ENCODE measurements at regions of chr12 and their contacts with region 1.

Region 1: GRCh38 chr12:64890873-64891468 is 66.5 kb downstream of the TBC1D30 start:
- DNase-seq: peak; percentile 49 to 67 (median 54)
- ATAC-seq: peak; percentile 90
- H3K4me3 ChIP-seq: no peak overlapping the region
- H3K27ac ChIP-seq: no peak overlapping the region
- H3K4me1 ChIP-seq: no peaks in the 10 kb centered on the region
- H3K27me3 ChIP-seq: 0 out of 5 replicates have a peak, but pooled peaks cover 0 to 4% of the 10 kb centered on the region in 2 experiments
- CTCF ChIP-seq: peak; percentile 57 to 84 (median 66)
- EP300 ChIP-seq: no peak
- POLR2A ChIP-seq: no peak
- RAD21 ChIP-seq: peak; percentile 87 to 90

Region 2: DNA sequence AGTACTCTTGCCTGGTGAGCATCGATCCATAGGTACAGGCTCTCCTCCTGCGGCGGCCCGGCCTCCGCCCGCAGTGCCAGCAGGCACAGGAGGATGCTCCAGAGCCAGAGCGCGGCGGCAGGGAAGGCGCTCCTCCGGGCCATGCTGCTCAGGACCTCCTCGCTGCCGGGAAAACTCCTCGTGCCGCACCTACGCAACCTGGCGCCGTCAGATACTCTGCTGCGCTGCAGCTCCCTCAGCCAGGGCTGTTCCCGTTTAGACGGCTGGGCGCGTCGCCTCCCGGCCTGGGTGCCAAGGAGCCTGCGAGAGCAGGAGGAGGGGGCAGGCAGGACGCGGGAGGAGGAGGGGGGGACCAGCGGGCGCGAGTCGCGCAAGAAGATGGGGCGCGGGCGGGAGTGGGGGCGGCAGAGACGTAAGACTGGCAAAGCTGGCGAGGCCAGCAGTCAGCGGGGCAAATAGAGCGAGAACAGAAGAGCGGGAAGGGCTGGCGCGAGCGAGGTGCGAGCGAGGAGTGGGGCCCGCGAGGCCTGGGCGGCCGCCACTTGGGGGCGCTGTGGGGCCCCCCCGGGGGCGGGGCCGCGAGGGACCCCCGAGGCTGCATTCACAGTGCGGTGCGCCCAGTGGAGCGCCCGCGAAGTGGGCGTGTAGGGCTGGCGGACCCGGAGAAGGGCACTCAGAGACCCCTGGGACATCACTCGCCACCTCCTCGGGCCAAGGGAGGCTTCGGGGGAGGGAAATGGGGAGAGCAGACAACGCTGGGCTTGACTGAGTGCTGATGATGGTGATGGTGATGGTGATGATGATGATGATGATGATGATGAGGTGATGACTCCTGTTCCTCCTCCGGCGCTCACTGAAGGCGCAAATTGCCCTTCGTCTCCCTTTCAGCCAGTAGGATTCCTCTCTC is 230.3 kb after region 1 on chr12 and contains the start of gene WIF1:
- CTCF ChIA-PET with region 1: interaction called, 3 read pairs
- POLR2A ChIA-PET with region 1: no interaction called
- in situ Hi-C with region 1: no loop called
- intact Hi-C with region 1: loop called (anchors 2 kb)
- DNase-seq: no peak
- ATAC-seq: no peak; the same call in 2 of the 3 replicates
- H3K4me3 ChIP-seq: no peak within 1 kb of the TSS
- H3K27ac ChIP-seq: no peak within 1 kb of the TSS
- H3K4me1 ChIP-seq: peaks cover 0 to 10% of the 10 kb centered on the region in 2 experiments; a peak in 3 of 5 replicates
- H3K27me3 ChIP-seq: peaks cover 2 to 10% of the 10 kb centered on the region in 2 experiments; a peak in 2 of 5 replicates
- CTCF ChIP-seq: 0 out of 6 replicates have a peak, but pooled peaks of 1 of the 3 experiments have one; percentile 11
- EP300 ChIP-seq: no peak
- POLR2A ChIP-seq: no peak
- RAD21 ChIP-seq: no peak
- polyA plus RNA-seq, gene WIF1: not detected

Region 3: GRCh38 chr12:65306366-65307168 is 415.6 kb after region 1 on chr12:
- CTCF ChIA-PET with region 1: no interaction called
- POLR2A ChIA-PET with region 1: no interaction called
- in situ Hi-C with region 1: no loop called
- intact Hi-C with region 1: loop called (anchors 2 kb)
- DNase-seq: peak in 2 of 4 experiments; percentile 17 to 43
- ATAC-seq: peak; percentile 69; the same call in 2 of the 3 replicates
- H3K4me3 ChIP-seq: no peak overlapping the region
- H3K27ac ChIP-seq: no peak overlapping the region
- H3K4me1 ChIP-seq: no peaks in the 10 kb centered on the region
- H3K27me3 ChIP-seq: no peaks in the 10 kb centered on the region
- CTCF ChIP-seq: peak; percentile 58 to 73 (median 63); a peak in 5 of 6 replicates
- EP300 ChIP-seq: no peak
- POLR2A ChIP-seq: no peak
- RAD21 ChIP-seq: peak; percentile 76 to 82

Region 4: DNA sequence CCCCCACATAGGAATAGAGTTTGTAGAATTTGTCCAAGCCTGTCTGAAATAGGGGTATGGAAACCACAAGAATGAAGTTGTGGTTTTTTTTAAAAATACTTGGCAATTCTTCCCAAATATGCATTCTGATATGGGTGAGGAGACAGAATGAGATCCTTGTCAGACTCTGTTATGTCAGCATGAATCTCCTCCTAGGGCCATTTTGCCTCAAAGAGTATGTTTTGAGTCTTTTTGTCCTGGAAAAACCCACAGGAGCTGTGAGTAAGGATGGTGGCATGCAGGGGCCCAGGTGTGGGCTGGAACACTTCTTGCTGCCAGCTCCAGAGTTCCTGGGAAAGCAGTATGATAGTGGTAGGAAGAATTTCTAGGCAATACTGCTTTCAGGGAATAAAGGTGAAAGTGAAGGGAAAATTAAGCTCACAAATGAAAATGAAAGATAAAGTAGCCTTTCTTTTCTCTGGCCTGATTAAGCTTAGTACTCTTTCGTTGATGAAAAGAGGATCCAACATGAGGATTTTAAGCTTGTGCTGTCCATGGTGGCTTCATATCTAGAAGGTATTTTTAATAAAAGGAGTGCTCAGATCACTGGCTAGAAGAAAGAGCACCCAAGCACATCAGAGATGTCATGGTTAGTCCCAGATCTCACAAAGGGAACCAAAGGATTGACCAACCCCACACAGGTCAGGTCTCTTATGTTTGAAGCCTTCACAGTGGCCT is 1108.8 kb after region 1 on chr12:
- CTCF ChIA-PET with region 1: no interaction called
- POLR2A ChIA-PET with region 1: no interaction called
- in situ Hi-C with region 1: loop called (anchors 25 kb)
- intact Hi-C with region 1: no loop called
- DNase-seq: no peak
- ATAC-seq: no peak
- H3K4me3 ChIP-seq: no peak overlapping the region
- H3K27ac ChIP-seq: no peak overlapping the region
- H3K4me1 ChIP-seq: no peaks in the 10 kb centered on the region
- H3K27me3 ChIP-seq: no peaks in the 10 kb centered on the region
- CTCF ChIP-seq: no peak
- EP300 ChIP-seq: no peak
- POLR2A ChIP-seq: no peak
- RAD21 ChIP-seq: no peak

Region 5: GRCh38 chr12:66409195-66409871 is 1518.4 kb after region 1 on chr12:
- CTCF ChIA-PET with region 1: no interaction called
- POLR2A ChIA-PET with region 1: no interaction called
- in situ Hi-C with region 1: loop called (anchors 25 kb)
- intact Hi-C with region 1: no loop called
- DNase-seq: peak in 2 of 4 experiments; percentile 10 to 57
- ATAC-seq: peak; percentile 85
- H3K4me3 ChIP-seq: no peak overlapping the region
- H3K27ac ChIP-seq: no peak overlapping the region
- H3K4me1 ChIP-seq: no peaks in the 10 kb centered on the region
- H3K27me3 ChIP-seq: 0 out of 5 replicates have a peak, but pooled peaks cover 0 to 4% of the 10 kb centered on the region in 2 experiments
- CTCF ChIP-seq: peak; percentile 67 to 76 (median 76)
- EP300 ChIP-seq: no peak
- POLR2A ChIP-seq: no peak
- RAD21 ChIP-seq: peak; percentile 86 to 92